Aorta (tissue), 5 donors: ENCODE measurements at regions of chr7 and their contacts with region 1.

Region 1: DNA sequence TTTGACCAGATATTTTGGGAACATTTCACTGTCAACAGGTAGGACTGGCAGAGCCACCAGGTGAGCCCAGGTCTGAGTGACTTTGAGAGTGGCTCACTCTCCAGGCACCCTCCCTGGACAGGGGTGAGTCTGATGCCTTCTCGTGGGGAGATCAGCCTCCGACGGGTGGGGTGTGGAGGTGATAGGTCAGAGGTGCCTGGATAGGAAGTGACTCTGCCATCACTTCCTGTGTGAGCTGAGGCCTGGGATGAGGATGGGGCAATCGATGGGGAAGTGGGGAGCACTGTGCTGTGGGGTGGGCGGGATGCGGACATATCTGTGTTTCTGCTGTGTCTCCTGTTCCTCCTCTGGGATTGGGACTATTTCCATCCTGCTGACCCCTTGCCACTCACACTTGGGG is 34.6 kb downstream of the IFT22 start:
- DNase-seq: no peak
- ATAC-seq: no peak
- H3K4me3 ChIP-seq: no peak overlapping the region
- H3K27ac ChIP-seq: no peak overlapping the region
- H3K4me1 ChIP-seq: no peaks in the 10 kb centered on the region
- H3K27me3 ChIP-seq: no peaks in the 10 kb centered on the region

Region 2: GRCh38 chr7:101153969-101154692 is 132.9 kb before region 1 on chr7 and contains the start of gene AP1S1:
- intact Hi-C with region 1: loop called in 1 of 2 experiments (anchors 5 kb)
- DNase-seq: peak; percentile 96 to 98
- ATAC-seq: peak; percentile 95
- H3K4me3 ChIP-seq: peak within 1 kb of the TSS; percentile 59 to 64
- H3K27ac ChIP-seq: no peak within 1 kb of the TSS
- H3K4me1 ChIP-seq: no peaks in the 10 kb centered on the region
- H3K27me3 ChIP-seq: no peaks in the 10 kb centered on the region
- total RNA-seq, gene AP1S1: 21.3 to 26.9 TPM

Region 3: GRCh38 chr7:101436857-101437576 is 150.0 kb after region 1 on chr7:
- intact Hi-C with region 1: no loop called
- DNase-seq: no peak
- ATAC-seq: no peak
- H3K4me3 ChIP-seq: no peak overlapping the region
- H3K27ac ChIP-seq: no peak overlapping the region
- H3K4me1 ChIP-seq: no peaks in the 10 kb centered on the region
- H3K27me3 ChIP-seq: no peaks in the 10 kb centered on the region